Activated T-helper 2 cell treated with anti-CD3 and anti-CD28 coated beads, Interferon-gamma antibody, Interleukin-2, Interleukin-4, amounts not matched to agents 10 μg/mL and 5 μg/mL and 100 μg/mL, durations not matched to agents 14 hours and 24 hours and 36 hours (primary cell): ENCODE measurements at regions of chr19 and their contacts with region 1.

Region 1: DNA sequence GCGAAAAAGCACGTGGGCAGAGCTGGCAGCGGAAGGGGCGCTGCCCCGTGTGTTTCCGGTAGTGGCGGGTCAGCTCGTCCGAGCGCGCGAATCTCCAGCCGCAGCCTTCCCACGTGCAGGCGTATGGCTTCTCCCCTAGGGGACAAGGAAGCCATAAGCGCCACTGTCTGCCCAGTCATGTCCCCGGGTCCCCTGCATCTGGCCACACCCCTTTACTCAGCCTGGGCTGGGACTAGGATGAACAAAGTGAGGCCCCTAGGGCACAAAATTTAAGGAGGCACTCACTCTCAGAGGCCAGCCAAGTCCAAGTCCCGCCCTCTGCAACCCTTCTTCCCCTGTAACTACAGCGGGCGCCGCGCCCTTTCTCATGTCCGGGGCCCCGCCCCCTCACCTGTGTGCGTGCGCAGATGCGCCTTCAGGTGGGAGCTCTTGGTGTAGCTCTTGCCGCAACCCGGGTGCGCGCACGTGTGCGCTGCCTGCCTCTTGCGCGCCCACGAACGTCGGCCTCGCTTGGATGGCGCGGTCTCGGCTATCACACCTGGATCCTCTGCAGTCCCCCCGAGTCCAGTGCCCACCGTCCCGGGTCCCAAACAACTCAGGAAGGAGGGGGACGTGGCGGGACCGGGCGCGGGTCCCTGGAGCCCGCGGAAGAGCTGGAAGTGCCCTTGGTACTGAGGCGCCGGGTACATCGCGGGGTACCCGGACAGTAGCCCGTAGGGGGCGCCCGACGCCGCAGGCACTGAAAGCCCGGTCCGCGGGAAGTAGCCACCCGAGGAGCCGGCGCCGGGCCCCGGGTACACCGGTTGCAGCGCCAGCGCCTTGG is 1.9 kb downstream of the KLF1 start:
- DNase-seq: peak; percentile 82
- H3K4me3 Mint-ChIP-seq: peak overlapping the region; percentile 84
- H3K27ac Mint-ChIP-seq: peak overlapping the region; percentile 61
- H3K4me1 Mint-ChIP-seq: peaks cover 13% of the 10 kb centered on the region
- H3K27me3 Mint-ChIP-seq: no peaks in the 10 kb centered on the region

Region 2: DNA sequence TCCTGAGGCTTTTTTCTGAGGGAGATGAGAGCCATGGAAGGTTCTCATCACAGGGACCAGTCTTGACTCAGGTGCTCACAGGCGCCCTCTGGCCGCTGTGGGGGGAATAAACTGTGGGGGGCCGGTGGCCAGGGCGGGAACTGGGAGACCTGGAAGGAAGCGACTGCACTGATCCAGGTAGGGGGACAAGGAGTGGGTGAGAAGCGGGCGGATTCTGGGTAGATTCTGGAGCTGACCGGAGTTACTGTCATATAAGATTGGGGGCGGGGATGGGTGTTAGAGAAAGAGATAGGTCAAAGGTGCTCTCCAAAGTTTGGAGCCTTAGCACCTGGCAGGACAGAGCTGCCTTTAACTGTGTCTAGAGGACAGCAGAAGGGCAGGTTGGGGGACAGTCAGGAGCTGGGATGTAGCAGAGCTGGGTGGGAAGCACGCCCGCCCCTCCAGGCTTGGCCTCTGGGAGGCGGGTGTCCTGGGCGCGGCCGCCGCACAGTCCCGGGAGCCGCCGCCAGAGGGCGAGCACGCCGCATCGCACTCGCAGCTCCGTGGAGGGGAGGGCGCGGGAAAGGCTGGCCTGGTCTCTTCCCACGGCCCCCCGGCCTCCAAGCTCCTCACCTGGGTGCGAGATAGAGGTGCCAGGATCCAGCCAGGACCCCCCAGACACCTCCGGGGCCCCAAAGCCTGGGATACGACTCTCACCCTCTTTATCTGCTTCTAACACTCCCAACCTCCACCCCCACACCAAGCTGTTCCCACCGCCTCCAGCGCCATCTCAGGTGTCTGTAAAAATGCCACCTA is 80.1 kb after region 1 on chr19:
- intact Hi-C with region 1: loop called (anchors 1 kb)
- DNase-seq: peak; percentile 75
- H3K4me3 Mint-ChIP-seq: peak overlapping the region; percentile 84
- H3K27ac Mint-ChIP-seq: peak overlapping the region; percentile 81
- H3K4me1 Mint-ChIP-seq: peaks cover 8% of the 10 kb centered on the region
- H3K27me3 Mint-ChIP-seq: peaks cover 3% of the 10 kb centered on the region